PC-3 (cell line): ENCODE measurements at regions of chr3 and their contacts with region 1.

Region 1: DNA sequence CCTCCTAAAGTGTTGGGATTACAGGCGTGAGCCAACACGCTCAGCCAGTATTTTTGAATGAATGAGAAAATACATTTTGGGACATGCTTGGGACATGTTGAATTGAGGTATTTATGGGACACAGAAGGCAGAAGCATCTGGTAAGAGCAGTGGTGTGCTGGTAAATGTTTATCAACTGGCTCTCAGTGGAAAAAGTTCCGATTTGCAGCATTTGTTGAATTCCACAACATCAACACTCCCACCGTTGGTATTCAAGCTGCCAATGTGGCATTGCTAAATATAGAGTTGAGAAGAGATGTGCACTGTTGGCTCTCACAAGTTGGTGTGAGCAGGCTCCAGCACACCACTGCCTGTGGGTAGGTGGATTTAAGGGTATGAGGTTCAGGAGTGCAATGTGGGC is 35.8 kb upstream of the LRRFIP2 start:
- DNase-seq: no peak
- ATAC-seq: no peak
- H3K4me3 ChIP-seq: no peak overlapping the region
- H3K27ac ChIP-seq: no peak overlapping the region
- H3K4me1 ChIP-seq: no peaks in the 10 kb centered on the region; the same call in 1 of the 2 replicates
- H3K27me3 ChIP-seq: no peaks in the 10 kb centered on the region
- CTCF ChIP-seq: no peak

Region 2: DNA sequence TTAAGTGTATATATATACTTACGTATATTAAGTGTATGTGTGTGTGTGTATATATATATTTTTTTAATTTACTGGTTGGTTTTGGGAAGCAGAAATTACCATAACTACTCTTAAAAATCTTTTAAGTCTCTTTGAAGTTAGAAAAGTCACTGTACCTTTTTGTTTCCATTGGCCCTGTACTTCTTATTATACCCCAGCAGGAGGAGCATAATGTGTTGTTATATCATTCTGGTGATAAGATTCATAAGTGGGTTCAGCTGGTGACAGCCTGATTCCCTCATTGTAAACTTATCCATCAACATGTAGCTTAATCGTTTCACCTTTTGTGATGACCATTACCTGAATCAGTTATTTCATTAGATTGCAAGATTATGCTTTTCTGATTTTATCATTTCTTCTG is 186.1 kb before region 1 on chr3:
- CTCF ChIA-PET with region 1: interaction called, 15 read pairs
- POLR2A ChIA-PET with region 1: no interaction called
- intact Hi-C with region 1: loop called (anchors 1 kb)
- DNase-seq: peak; percentile 23
- ATAC-seq: peak; percentile 24; the same call in 1 of the 2 replicates
- H3K4me3 ChIP-seq: no peak overlapping the region
- H3K27ac ChIP-seq: no peak overlapping the region
- H3K4me1 ChIP-seq: no peaks in the 10 kb centered on the region
- H3K27me3 ChIP-seq: no peaks in the 10 kb centered on the region
- CTCF ChIP-seq: peak; percentile 55

Region 3: GRCh38 chr3:37053337-37053736 is 156.9 kb before region 1 on chr3:
- CTCF ChIA-PET with region 1: no interaction called
- POLR2A ChIA-PET with region 1: no interaction called
- intact Hi-C with region 1: loop called (anchors 2 kb)
- DNase-seq: no peak
- ATAC-seq: no peak
- H3K4me3 ChIP-seq: no peak overlapping the region
- H3K27ac ChIP-seq: 0 out of 2 replicates have a peak overlapping the region, but pooled peaks have one; percentile 65
- H3K4me1 ChIP-seq: peaks cover 29% of the 10 kb centered on the region
- H3K27me3 ChIP-seq: no peaks in the 10 kb centered on the region
- CTCF ChIP-seq: no peak

Region 4: GRCh38 chr3:37072892-37073291 is 137.3 kb before region 1 on chr3:
- CTCF ChIA-PET with region 1: no interaction called
- POLR2A ChIA-PET with region 1: no interaction called
- intact Hi-C with region 1: loop called (anchors 5 kb)
- DNase-seq: peak; percentile 92
- ATAC-seq: peak; percentile 95
- H3K4me3 ChIP-seq: no peak overlapping the region
- H3K27ac ChIP-seq: peak overlapping the region; percentile 3; the same call in 1 of the 2 replicates
- H3K4me1 ChIP-seq: peaks cover 7% of the 10 kb centered on the region; the same call in 1 of the 2 replicates
- H3K27me3 ChIP-seq: no peaks in the 10 kb centered on the region
- CTCF ChIP-seq: no peak

Region 5: GRCh38 chr3:37498126-37499039 is 288.2 kb after region 1 on chr3:
- CTCF ChIA-PET with region 1: no interaction called
- POLR2A ChIA-PET with region 1: no interaction called
- intact Hi-C with region 1: no loop called
- DNase-seq: no peak
- ATAC-seq: no peak
- H3K4me3 ChIP-seq: no peak overlapping the region
- H3K27ac ChIP-seq: no peak overlapping the region
- H3K4me1 ChIP-seq: no peaks in the 10 kb centered on the region
- H3K27me3 ChIP-seq: peaks cover 97% of the 10 kb centered on the region
- CTCF ChIP-seq: no peak